Ascending aorta (tissue), 2 donors: ENCODE measurements at regions of chr21 and their contacts with region 1.

Region 1: DNA sequence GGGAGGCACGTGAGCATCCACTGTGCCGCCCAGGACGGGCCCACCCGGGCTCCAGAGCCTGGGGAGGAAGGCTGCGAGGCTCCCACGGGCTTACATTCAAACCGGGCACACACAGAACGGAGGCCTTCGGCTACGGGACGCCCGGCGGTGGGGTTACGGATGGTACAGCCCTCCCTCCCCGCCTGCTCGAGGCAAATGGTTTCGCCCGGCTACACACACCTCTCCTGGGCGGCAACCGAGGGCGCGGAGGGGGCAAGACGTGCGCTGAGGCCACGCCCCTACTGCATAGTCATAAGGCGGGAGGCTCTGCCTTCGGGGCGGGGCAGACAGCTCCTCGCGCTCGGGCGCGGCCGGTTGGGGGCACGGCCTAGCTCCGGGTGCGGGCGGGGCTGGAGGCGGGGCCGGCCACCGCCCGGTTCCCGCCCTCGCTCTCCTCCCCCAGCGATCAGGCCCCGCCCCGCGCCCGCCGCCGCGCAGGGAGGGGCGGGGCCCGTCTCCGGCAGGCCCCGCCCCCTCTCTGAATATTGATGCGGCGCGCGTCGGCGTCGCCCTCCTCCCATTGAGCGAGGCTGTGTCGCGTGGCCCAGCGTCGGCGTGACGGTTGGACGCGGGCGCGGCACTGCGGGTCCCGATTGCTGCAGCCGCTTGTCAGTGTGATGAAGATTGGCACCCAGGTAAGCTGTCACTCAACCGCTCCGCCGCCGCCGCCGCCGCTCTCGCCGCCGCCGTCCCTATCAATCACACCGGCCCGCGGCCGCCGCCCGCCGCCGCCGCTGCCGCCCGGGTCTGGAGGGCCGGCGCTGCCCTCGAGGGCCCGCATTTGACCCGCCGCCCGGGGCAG is at the start of gene PKNOX1:
- DNase-seq: peak; percentile 95 to 99
- H3K4me3 ChIP-seq: peak within 1 kb of the TSS; percentile 86 to 93
- H3K27ac ChIP-seq: peak within 1 kb of the TSS; percentile 96
- H3K4me1 ChIP-seq: peaks cover 0 to 6% of the 10 kb centered on the region in 2 donors
- H3K27me3 ChIP-seq: no peaks in the 10 kb centered on the region
- CTCF ChIP-seq: peak in 1 of 3 experiments; percentile 43
- total RNA-seq, gene PKNOX1: 11.2 TPM

Region 2: GRCh38 chr21:42878993-42879787 is 95.0 kb before region 1 on chr21 and contains the start of gene WDR4:
- intact Hi-C with region 1: loop called (anchors 1 kb)
- DNase-seq: peak; percentile 92 to 99
- H3K4me3 ChIP-seq: peak within 1 kb of the TSS; percentile 77 to 91
- H3K27ac ChIP-seq: peak within 1 kb of the TSS; percentile 85 to 93
- H3K4me1 ChIP-seq: peaks cover 0 to 15% of the 10 kb centered on the region in 2 donors
- H3K27me3 ChIP-seq: no peaks in the 10 kb centered on the region
- CTCF ChIP-seq: no peak
- total RNA-seq, gene WDR4: 51.9 TPM

Region 3: GRCh38 chr21:42923541-42924432 is 50.4 kb before region 1 on chr21:
- intact Hi-C with region 1: loop called (anchors 5 kb)
- DNase-seq: peak in 1 of 2 donors; percentile 89
- H3K4me3 ChIP-seq: peak overlapping the region in 1 of 2 donors; percentile 24
- H3K27ac ChIP-seq: no peak overlapping the region
- H3K4me1 ChIP-seq: no peaks in the 10 kb centered on the region
- H3K27me3 ChIP-seq: no peaks in the 10 kb centered on the region
- CTCF ChIP-seq: peak; percentile 61 to 87 (median 82)

Region 4: GRCh38 chr21:42991992-42992740 is 18.0 kb after region 1 on chr21:
- intact Hi-C with region 1: loop called (anchors 1 kb)
- DNase-seq: peak in 1 of 2 donors; percentile 70
- H3K4me3 ChIP-seq: no peak overlapping the region
- H3K27ac ChIP-seq: no peak overlapping the region
- H3K4me1 ChIP-seq: peaks cover 0 to 6% of the 10 kb centered on the region in 2 donors
- H3K27me3 ChIP-seq: no peaks in the 10 kb centered on the region
- CTCF ChIP-seq: no peak

Region 5: GRCh38 chr21:43012595-43012994 is 38.4 kb after region 1 on chr21:
- intact Hi-C with region 1: no loop called
- DNase-seq: no peak
- H3K4me3 ChIP-seq: no peak overlapping the region
- H3K27ac ChIP-seq: no peak overlapping the region
- H3K4me1 ChIP-seq: no peaks in the 10 kb centered on the region
- H3K27me3 ChIP-seq: no peaks in the 10 kb centered on the region
- CTCF ChIP-seq: no peak